HEK293 (cell line): ENCODE measurements at regions of chr1 and their contacts with region 1.

Region 1: GRCh38 chr1:75233302-75233929 is 99.2 kb downstream of the LHX8 start:
- H3K4me3 ChIP-seq: no peak overlapping the region
- H3K27ac ChIP-seq: no peak overlapping the region
- H3K4me1 ChIP-seq: no peaks in the 10 kb centered on the region
- CTCF ChIP-seq: no peak

Region 2: DNA sequence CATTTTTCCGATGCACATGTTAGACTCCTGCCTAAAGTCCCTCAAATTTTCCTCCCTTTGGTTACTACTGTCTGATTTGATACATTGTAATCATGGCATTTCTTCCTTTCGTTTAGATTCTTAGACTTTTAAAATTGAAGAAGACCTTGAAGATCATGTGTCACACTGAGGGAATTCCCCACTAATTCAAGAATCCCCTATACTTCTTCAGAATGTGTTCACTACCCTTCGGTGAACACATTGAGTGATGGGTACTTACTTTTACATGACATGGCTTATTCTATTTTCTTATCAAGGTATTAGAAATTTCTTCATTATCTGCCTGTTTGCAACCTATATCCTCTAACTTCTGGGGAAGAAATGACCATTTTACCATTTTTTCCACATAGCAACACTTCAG is 13.3 kb before region 1 on chr1:
- CTCF ChIA-PET with region 1: interaction called, 15 read pairs
- POLR2A ChIA-PET with region 1: no interaction called
- H3K4me3 ChIP-seq: no peak overlapping the region
- H3K27ac ChIP-seq: no peak overlapping the region
- H3K4me1 ChIP-seq: no peaks in the 10 kb centered on the region
- CTCF ChIP-seq: no peak

Region 3: GRCh38 chr1:75245239-75245638 is 11.8 kb after region 1 on chr1:
- CTCF ChIA-PET with region 1: interaction called, 27 read pairs
- POLR2A ChIA-PET with region 1: no interaction called
- H3K4me3 ChIP-seq: no peak overlapping the region
- H3K27ac ChIP-seq: no peak overlapping the region
- H3K4me1 ChIP-seq: no peaks in the 10 kb centered on the region
- CTCF ChIP-seq: no peak

Region 4: GRCh38 chr1:75341537-75341936 is 108.1 kb after region 1 on chr1:
- CTCF ChIA-PET with region 1: interaction called, 10 read pairs
- POLR2A ChIA-PET with region 1: no interaction called
- H3K4me3 ChIP-seq: no peak overlapping the region
- H3K27ac ChIP-seq: no peak overlapping the region
- H3K4me1 ChIP-seq: peaks cover 27% of the 10 kb centered on the region
- CTCF ChIP-seq: no peak

Region 5: GRCh38 chr1:75632350-75632949 is 399.0 kb after region 1 on chr1:
- CTCF ChIA-PET with region 1: interaction called, 22 read pairs
- POLR2A ChIA-PET with region 1: no interaction called
- H3K4me3 ChIP-seq: no peak overlapping the region
- H3K27ac ChIP-seq: no peak overlapping the region
- H3K4me1 ChIP-seq: peaks cover 3% of the 10 kb centered on the region; the same call in 1 of the 2 replicates
- CTCF ChIP-seq: peak; percentile 21; the same call in 1 of the 2 replicates